ENCODE measurements at regions of chr2 and their contacts with region 1.

Region 1: DNA sequence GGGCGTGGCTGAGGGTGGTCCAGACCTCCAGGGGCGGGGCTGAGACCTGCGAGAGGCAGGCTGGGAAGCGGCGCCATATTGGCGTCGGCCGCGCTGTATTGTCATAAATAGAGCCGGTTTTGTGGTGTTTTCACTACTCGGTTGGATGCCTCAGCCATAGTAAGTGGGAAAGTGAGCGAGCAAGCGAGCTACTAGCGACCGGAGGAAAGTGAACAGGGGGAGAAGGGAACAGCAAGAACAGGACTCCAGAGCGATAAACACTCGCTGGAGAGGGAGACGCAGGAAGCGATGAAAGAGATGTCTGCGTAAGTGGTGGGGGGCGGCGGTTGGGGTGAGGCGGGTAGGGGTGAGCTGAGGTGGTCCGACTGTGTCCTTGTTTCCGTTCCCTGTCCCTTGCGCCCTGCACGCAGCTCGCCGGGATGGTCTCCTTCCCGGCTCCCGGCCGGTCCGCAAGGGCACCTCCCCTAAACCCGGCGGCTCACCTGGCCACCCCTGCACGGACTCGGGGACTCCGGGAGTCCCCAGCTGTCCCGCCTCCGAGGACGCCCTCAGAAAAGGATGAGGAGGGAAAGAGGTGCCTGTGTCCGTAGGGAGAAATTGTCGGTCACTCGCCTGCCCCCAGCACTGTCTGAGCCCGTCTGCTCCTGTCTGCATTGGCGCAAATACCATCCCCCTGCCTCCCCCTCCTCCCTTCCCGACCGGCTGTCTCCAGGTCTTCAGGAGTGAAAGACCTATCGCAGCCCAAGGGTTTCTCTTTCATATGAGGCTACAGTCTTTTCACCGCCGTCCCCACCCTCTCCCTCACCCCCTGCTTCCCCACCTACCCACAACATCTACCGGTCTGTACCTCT is at the start of gene PAPOLG:
- DNase-seq: peak; percentile 89 to 98
- H3K4me3 ChIP-seq: peak within 1 kb of the TSS; percentile 71 to 73
- H3K27ac ChIP-seq: peak within 1 kb of the TSS; percentile 71 to 81
- H3K4me1 ChIP-seq: peaks cover 0 to 9% of the 10 kb centered on the region in 2 donors
- H3K27me3 ChIP-seq: no peaks in the 10 kb centered on the region
- CTCF ChIP-seq: no peak
- total RNA-seq, gene PAPOLG: 11.4 TPM

Region 2: GRCh38 chr2:60504049-60504448 is 252.4 kb before region 1 on chr2:
- intact Hi-C with region 1: no loop called
- DNase-seq: no peak
- H3K4me3 ChIP-seq: no peak overlapping the region
- H3K27ac ChIP-seq: no peak overlapping the region
- H3K4me1 ChIP-seq: no peaks in the 10 kb centered on the region
- H3K27me3 ChIP-seq: no peaks in the 10 kb centered on the region
- CTCF ChIP-seq: no peak

Region 3: DNA sequence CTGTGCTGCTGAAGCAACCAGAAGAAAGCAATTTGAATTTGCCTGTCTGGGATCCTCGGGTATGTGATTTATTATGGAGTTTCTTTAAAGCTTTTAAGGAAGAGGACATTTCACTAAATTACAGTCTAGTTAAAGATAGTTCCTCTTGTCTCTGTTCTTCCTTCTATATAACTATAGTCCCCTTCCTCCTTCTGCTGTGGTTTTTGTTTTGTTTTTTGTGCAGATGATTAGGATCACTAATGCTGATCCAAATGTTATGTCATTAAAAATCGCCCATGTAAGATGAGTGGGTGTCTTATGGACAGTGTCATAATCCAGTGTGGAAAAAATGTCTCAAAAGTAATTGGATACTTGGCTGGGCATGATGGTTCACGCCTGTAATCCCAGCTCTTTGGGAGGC is 24.3 kb after region 1 on chr2:
- intact Hi-C with region 1: loop called (anchors 2 kb)
- DNase-seq: no peak
- H3K4me3 ChIP-seq: no peak overlapping the region
- H3K27ac ChIP-seq: no peak overlapping the region
- H3K4me1 ChIP-seq: peaks cover 0 to 6% of the 10 kb centered on the region in 2 donors
- H3K27me3 ChIP-seq: no peaks in the 10 kb centered on the region
- CTCF ChIP-seq: no peak

Region 4: DNA sequence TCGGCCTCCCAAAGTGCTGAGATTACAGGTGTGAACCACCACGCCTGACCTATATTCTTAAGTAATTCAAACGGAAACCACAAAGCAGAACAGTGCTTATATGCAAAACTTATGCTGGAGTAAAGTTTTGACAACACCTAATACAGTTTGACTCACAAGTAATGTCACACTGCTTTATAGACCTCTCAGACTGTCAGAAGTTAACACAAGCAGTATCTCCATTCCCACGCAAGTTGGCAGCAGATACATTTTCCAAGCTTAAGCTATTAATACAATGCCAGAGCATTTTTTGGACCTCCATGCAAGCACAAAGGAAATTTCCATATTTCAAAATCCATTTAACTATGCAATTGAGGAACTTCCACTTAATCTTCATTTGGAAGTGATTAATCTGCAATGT is 288.2 kb after region 1 on chr2:
- intact Hi-C with region 1: no loop called
- DNase-seq: no peak
- H3K4me3 ChIP-seq: no peak overlapping the region
- H3K27ac ChIP-seq: peak overlapping the region in 1 of 2 donors; percentile 22
- H3K4me1 ChIP-seq: peaks cover 0 to 3% of the 10 kb centered on the region in 2 donors
- H3K27me3 ChIP-seq: no peaks in the 10 kb centered on the region
- CTCF ChIP-seq: no peak

Region 5: DNA sequence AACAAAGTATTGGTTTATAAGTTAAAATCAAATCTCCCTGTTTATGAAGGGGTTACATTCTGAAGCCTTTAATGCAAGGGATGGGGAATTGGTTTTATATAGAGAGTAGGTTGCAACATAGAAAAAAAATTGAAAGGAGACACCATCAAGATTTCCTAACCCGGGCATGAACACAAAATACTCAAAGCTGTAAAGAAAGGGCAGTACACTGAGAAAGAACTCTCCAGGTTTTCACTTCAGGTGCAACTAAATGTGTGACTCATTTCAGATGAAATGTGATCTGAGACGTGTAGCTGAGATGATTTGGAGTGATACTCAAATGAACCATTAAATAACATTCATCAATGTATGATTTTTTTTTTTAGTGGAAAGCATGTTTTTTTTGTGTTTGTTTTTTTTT is 352.9 kb after region 1 on chr2:
- intact Hi-C with region 1: no loop called
- DNase-seq: no peak
- H3K4me3 ChIP-seq: no peak overlapping the region
- H3K27ac ChIP-seq: no peak overlapping the region
- H3K4me1 ChIP-seq: no peaks in the 10 kb centered on the region
- H3K27me3 ChIP-seq: no peaks in the 10 kb centered on the region
- CTCF ChIP-seq: no peak